ENCODE measurements at regions of chr1 and their contacts with region 1.

Region 1: DNA sequence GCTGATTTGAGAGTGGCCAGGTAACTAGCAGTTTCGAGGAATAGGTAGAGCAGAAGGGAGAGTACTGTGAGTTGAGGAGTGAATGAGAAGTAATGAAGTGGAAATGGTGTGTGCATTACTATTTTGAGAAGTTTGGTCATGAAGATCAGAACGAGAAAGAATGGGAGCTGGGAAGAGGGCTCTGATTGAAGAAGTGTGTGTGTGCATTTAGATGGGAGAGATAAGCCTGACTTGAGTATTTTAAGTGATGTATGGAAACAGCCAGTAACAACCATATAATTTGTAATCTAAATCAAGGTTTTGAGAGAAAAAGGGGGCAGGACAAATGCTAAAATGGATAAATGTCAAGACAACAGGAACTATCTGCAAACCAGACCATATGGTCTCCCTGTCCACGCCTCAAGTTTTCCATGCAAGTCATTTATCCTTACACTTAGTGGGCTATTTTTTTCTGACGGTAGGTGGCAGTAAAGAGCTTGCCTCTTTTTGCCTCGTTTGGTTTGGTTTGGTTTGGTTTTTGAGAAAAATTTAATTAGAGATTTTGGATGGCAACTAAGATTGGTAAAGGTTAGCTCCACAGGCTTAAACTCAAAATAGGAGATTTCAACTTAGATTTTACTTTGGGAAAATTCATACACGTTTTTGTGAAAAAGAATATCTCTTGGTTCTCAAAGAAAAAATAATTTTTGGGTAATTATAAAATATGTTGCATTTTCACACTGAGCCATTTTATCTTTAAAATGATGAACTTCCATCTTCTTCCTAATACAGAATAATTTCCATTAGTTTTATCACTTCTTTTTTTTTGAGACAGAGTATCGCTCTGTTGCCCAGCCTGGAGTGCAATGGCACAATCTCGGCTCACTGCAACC is 9.5 kb upstream of the B3GALNT2 start:
- DNase-seq: peak; percentile 54
- ATAC-seq: peak; percentile 79
- H3K4me3 Mint-ChIP-seq: no peak overlapping the region
- H3K27ac Mint-ChIP-seq: no peak overlapping the region
- H3K4me1 Mint-ChIP-seq: peaks cover 2% of the 10 kb centered on the region
- H3K27me3 Mint-ChIP-seq: peaks cover 1% of the 10 kb centered on the region
- CTCF ChIP-seq: peak; percentile 85

Region 2: GRCh38 chr1:235430991-235431390 is 82.7 kb before region 1 on chr1:
- CTCF ChIA-PET with region 1: no interaction called
- POLR2A ChIA-PET with region 1: no interaction called
- intact Hi-C with region 1: no loop called
- DNase-seq: no peak
- ATAC-seq: no peak
- H3K4me3 Mint-ChIP-seq: no peak overlapping the region
- H3K27ac Mint-ChIP-seq: no peak overlapping the region
- H3K4me1 Mint-ChIP-seq: no peaks in the 10 kb centered on the region
- H3K27me3 Mint-ChIP-seq: no peaks in the 10 kb centered on the region
- CTCF ChIP-seq: no peak

Region 3: GRCh38 chr1:235527196-235527814 is 13.6 kb after region 1 on chr1:
- CTCF ChIA-PET with region 1: interaction called, 35 read pairs
- POLR2A ChIA-PET with region 1: interaction called, 3 read pairs
- intact Hi-C with region 1: no loop called
- DNase-seq: no peak
- ATAC-seq: no peak
- H3K4me3 Mint-ChIP-seq: no peak overlapping the region
- H3K27ac Mint-ChIP-seq: no peak overlapping the region
- H3K4me1 Mint-ChIP-seq: no peaks in the 10 kb centered on the region
- H3K27me3 Mint-ChIP-seq: no peaks in the 10 kb centered on the region
- CTCF ChIP-seq: no peak

Region 4: GRCh38 chr1:235601104-235601503 is 87.4 kb after region 1 on chr1:
- CTCF ChIA-PET with region 1: interaction called, 17 read pairs
- POLR2A ChIA-PET with region 1: no interaction called
- intact Hi-C with region 1: no loop called
- DNase-seq: peak; percentile 63
- ATAC-seq: peak; percentile 60
- H3K4me3 Mint-ChIP-seq: no peak overlapping the region
- H3K27ac Mint-ChIP-seq: no peak overlapping the region
- H3K4me1 Mint-ChIP-seq: no peaks in the 10 kb centered on the region
- H3K27me3 Mint-ChIP-seq: no peaks in the 10 kb centered on the region
- CTCF ChIP-seq: peak; percentile 38

Region 5: GRCh38 chr1:235739124-235739523 is 225.4 kb after region 1 on chr1:
- CTCF ChIA-PET with region 1: no interaction called
- POLR2A ChIA-PET with region 1: no interaction called
- intact Hi-C with region 1: loop called (anchors 10 kb)
- DNase-seq: no peak
- ATAC-seq: no peak
- H3K4me3 Mint-ChIP-seq: no peak overlapping the region
- H3K27ac Mint-ChIP-seq: no peak overlapping the region
- H3K4me1 Mint-ChIP-seq: peaks cover 2% of the 10 kb centered on the region
- H3K27me3 Mint-ChIP-seq: no peaks in the 10 kb centered on the region
- CTCF ChIP-seq: no peak